Activated CD4-positive, alpha-beta memory T cell treated with anti-CD3 and anti-CD28 coated beads, Interleukin-2, amount 10 ng/mL, durations not matched to agents 7 days and 5 days (primary cell): ENCODE measurements at regions of chr7 and their contacts with region 1.

Region 1: GRCh38 chr7:33932832-33933468 is 27.6 kb downstream of the BMPER start:
- DNase-seq: peak; percentile 62
- H3K4me3 Mint-ChIP-seq: no peak overlapping the region
- H3K27ac Mint-ChIP-seq: no peak overlapping the region
- H3K4me1 Mint-ChIP-seq: no peaks in the 10 kb centered on the region
- H3K27me3 Mint-ChIP-seq: peaks cover 3% of the 10 kb centered on the region

Region 2: GRCh38 chr7:33185786-33186185 is 747.2 kb before region 1 on chr7:
- CTCF ChIA-PET with region 1: interaction called, 12 read pairs
- POLR2A ChIA-PET with region 1: no interaction called
- DNase-seq: no peak
- H3K4me3 Mint-ChIP-seq: no peak overlapping the region
- H3K27ac Mint-ChIP-seq: no peak overlapping the region
- H3K4me1 Mint-ChIP-seq: peaks cover 5% of the 10 kb centered on the region
- H3K27me3 Mint-ChIP-seq: no peaks in the 10 kb centered on the region

Region 3: DNA sequence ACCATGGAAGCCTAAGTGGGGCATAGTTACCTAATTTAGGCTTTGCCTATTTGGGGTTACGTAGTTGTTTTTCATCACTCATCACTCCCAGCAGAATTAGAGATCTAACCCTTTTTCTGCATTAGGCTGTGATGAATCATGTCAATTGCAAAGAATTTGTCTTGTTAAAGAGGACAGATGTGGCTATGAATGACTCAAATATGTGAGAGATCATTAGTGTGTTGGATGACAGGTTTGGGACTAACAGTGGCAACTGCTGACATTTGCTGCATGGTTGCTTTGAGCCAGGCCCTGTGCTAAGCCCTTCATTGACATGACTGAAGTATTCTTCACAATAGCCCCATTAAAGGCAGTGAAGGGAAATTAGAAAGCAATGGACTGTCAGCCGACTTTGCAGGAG is 111.0 kb before region 1 on chr7:
- CTCF ChIA-PET with region 1: no interaction called
- POLR2A ChIA-PET with region 1: no interaction called
- DNase-seq: no peak
- H3K4me3 Mint-ChIP-seq: no peak overlapping the region
- H3K27ac Mint-ChIP-seq: no peak overlapping the region
- H3K4me1 Mint-ChIP-seq: no peaks in the 10 kb centered on the region
- H3K27me3 Mint-ChIP-seq: no peaks in the 10 kb centered on the region